ENCODE measurements at regions of chr12 and their contacts with region 1.

Region 1: GRCh38 chr12:116525418-116526001 is 33.7 kb upstream of the MAP1LC3B2 start:
- DNase-seq: peak; percentile 55 to 64
- H3K4me3 ChIP-seq: no peak overlapping the region
- H3K27ac ChIP-seq: no peak overlapping the region
- H3K4me1 ChIP-seq: peaks cover 40% of the 10 kb centered on the region
- H3K27me3 ChIP-seq: no peaks in the 10 kb centered on the region
- CTCF ChIP-seq: no peak

Region 2: DNA sequence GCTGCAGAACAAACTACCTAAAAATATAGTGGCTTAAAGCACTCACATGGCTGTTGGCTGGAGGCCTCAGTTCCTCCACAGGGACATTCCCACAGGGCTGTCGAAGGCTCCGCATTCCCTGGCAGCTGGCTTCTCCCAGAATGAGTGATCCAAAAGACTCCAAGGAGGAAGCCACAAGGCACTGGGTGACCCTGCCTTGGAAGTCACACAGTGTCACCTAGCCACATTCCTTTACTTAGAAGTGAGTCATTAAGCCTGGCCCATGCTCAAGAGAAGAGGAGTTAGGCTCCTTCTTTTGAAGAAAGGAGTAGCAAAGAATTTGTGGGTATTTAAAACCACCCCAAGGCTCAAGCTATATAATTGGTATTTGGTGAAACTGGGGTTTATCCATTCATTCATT is 30.2 kb before region 1 on chr12:
- CTCF ChIA-PET with region 1: interaction called, 6 read pairs
- POLR2A ChIA-PET with region 1: no interaction called
- intact Hi-C with region 1: loop called (anchors 1 kb)
- DNase-seq: peak; percentile 78 to 99
- H3K4me3 ChIP-seq: no peak overlapping the region
- H3K27ac ChIP-seq: peak overlapping the region; percentile 95
- H3K4me1 ChIP-seq: peaks cover 61% of the 10 kb centered on the region
- H3K27me3 ChIP-seq: no peaks in the 10 kb centered on the region
- CTCF ChIP-seq: no peak

Region 3: DNA sequence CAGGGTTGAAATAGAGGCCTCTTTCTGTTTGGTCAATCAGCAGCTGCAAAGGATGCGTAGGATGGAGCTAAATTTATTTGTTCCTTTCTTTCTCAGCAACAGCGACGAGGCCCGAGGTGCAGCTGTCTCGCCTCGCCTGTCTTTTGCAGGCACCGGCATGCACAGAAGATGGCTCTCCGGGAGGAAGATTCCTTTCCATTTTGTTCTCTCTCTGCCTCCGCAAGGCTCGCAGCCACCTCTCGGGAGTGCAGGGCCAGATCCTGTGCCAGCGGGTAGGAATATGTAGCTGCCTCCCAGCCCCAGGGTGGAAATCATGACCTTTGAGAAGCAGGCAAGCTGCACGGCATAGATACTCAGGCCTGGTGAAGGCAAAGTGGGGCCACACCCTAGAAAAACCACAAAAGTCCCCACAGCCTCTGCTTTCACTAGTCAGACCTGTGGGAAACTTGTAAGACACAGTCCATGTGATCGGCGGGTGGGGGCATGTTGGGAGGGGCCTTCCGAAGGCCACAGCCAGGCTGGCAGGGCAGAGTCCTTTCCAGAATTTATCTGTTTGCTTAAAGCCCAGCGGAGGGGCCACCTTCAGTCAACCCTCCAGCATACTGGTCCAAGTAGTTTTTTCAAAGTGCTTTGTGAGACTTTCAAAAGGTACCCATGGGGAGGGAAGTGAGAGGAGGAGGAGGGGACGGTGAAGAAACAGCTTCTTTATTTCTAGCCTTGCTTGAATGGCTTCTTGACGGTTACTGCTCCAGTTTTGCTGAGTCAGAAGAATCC is 33.8 kb after region 1 on chr12 and contains the start of gene MAP1LC3B2:
- CTCF ChIA-PET with region 1: no interaction called
- POLR2A ChIA-PET with region 1: no interaction called
- intact Hi-C with region 1: loop called (anchors 1 kb)
- DNase-seq: peak; percentile 88 to 95
- H3K4me3 ChIP-seq: peak within 1 kb of the TSS; percentile 18; the same call in 1 of the 2 replicates
- H3K27ac ChIP-seq: peak within 1 kb of the TSS; percentile 87
- H3K4me1 ChIP-seq: peaks cover 23% of the 10 kb centered on the region
- H3K27me3 ChIP-seq: no peaks in the 10 kb centered on the region
- CTCF ChIP-seq: no peak
- total RNA-seq, gene MAP1LC3B2: 1.1 and 1.4 TPM in 2 replicates

Region 4: DNA sequence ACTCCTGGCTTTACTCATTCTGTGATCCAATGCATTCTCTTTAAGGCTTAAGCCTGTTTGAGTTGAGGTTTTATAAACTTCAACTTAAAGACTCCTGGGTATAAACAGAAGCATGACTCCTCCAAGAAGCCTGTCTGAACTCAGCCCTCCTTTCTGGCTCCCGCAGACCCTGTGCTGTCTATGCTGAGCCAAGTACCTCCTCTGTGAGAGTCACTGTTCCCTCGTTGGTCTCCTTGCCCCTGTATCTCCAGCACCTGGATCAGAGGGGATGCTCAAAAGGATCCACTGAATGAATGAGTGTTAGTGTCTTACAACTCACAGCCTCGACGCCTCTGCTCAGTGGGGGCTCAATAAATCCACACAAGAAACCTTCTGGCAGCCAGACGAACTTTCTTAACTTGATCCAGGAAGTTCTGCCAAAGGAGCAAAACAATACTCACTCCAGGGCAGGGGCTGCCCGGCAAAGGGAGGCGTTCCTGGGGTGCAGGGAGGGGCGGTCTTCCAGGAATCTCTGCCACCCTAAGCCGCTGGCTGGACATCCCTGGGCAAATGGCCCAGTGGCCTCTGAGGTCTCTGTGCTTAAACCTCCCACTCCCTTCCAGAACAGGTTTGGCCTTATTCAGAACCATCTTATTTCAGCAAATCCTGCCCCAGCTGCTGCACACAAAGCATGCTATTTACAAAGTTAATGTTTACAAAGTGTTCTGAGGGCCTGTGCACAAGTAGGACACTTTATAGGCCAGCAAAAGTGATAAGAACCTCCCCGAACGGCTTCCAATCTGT is 66.5 kb after region 1 on chr12:
- CTCF ChIA-PET with region 1: no interaction called
- POLR2A ChIA-PET with region 1: no interaction called
- intact Hi-C with region 1: loop called (anchors 5 kb)
- DNase-seq: peak in 1 of 2 experiments; percentile 70
- H3K4me3 ChIP-seq: no peak overlapping the region
- H3K27ac ChIP-seq: no peak overlapping the region
- H3K4me1 ChIP-seq: peaks cover 12% of the 10 kb centered on the region; the same call in 1 of the 2 replicates
- H3K27me3 ChIP-seq: 0 out of 2 replicates have a peak, but pooled peaks cover 3% of the 10 kb centered on the region
- CTCF ChIP-seq: no peak

Measured in PC-9 (cell line).